PC-9 (cell line): ENCODE measurements at regions of chr11 and their contacts with region 1.

Region 1: DNA sequence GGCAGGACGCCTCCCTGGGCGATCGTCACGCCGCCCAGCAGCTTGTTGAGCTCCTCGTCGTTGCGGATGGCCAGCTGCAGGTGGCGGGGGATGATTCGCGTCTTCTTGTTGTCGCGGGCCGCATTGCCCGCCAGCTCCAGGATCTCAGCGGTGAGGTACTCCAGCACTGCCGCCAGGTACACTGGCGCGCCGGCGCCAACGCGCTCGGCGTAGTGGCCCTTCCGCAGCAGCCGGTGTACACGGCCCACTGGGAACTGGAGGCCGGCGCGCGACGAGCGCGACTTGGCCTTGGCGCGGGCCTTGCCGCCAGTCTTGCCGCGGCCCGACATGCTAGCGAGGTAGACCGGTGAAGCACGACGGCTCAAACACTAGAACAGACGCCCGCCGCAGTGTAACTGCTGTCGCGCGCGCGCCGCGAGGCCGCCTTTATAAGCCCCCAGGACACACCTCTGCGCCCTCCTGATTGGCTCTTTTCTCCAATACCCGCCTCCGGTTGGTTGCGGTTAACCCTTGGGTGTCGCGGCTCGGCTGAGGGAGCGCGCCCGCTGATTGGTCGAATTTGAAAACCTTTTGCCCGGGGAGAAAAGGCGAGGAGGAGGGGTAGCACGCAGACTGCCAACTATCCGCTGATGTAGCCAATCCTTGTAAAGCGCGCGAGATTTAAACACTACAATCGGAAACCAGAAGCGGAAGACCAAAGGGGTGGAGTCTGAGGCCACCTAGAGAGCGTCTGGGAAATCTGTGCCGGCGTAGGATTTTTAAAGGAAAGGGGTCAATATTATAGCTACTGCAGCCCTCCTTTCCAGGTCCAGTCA is 6.4 kb downstream of the DPAGT1 start:
- DNase-seq: peak; percentile 98 to 99
- H3K4me3 ChIP-seq: peak overlapping the region; percentile 91
- H3K27ac ChIP-seq: peak overlapping the region; percentile 48
- H3K4me1 ChIP-seq: peaks cover 29% of the 10 kb centered on the region
- H3K27me3 ChIP-seq: no peaks in the 10 kb centered on the region
- CTCF ChIP-seq: peak; percentile 27; the same call in 1 of the 2 replicates

Region 2: DNA sequence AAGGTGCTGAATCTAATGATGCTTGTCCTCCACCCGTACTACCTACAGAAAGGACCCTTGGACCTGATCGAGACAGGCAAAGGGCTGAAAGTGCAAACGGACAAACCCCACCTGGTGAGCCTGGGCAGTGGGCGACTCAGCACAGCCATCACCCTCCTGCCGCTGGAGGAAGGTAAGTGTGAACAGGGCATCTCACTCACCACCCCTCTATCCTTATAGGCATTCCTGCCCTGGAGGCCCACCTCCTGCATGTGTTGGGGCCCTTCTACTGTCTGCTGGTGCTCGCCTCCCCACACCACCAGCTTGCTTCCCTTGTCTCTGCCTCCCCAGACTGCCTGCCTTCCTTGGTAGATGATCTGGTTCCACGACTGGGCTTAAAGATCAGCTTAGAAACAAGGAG is 480.8 kb before region 1 on chr11:
- CTCF ChIA-PET with region 1: no interaction called
- POLR2A ChIA-PET with region 1: interaction called, 34 read pairs
- intact Hi-C with region 1: no loop called
- DNase-seq: no peak
- H3K4me3 ChIP-seq: no peak overlapping the region
- H3K27ac ChIP-seq: no peak overlapping the region
- H3K4me1 ChIP-seq: peaks cover 27% of the 10 kb centered on the region
- H3K27me3 ChIP-seq: no peaks in the 10 kb centered on the region
- CTCF ChIP-seq: no peak

Region 3: DNA sequence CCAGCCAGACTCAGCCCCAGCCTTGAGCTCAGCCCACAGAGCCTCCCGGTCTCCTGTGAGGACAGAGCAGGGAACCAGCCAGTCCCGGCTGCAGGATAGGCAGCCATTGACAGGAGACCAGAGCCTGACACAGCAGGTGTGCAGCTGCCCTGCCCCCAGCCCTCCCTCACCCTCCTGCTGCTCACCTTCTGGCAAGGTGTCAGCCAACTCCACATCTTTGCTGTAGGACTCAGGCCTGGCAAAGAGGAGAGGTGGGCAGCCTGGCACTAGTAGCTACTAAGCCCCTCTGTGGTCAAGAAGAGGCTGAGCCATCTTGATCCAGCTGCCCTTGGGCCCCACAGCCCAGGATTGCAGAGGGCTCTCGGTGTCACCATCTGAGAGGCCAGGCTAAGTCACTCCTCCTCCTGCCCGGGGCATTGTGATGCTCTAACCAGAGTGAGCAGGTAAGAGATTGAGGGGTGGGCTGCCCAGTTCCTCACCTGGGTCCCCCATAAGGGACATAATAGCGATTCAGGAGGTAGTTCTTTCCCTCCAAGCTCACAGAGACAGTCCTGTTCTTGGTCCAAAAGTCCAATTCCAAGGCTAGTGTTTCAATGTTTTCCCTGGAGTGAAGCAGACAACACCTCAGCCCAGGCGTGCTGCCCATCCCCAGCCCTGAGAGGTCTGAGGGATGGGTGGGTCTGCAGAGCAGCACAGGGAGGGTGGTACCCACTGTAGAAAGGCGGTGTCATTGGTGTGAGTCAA is 434.4 kb before region 1 on chr11:
- CTCF ChIA-PET with region 1: no interaction called
- POLR2A ChIA-PET with region 1: no interaction called
- intact Hi-C with region 1: no loop called
- DNase-seq: no peak
- H3K4me3 ChIP-seq: no peak overlapping the region
- H3K27ac ChIP-seq: no peak overlapping the region
- H3K4me1 ChIP-seq: peaks cover 11% of the 10 kb centered on the region
- H3K27me3 ChIP-seq: no peaks in the 10 kb centered on the region
- CTCF ChIP-seq: no peak

Region 4: DNA sequence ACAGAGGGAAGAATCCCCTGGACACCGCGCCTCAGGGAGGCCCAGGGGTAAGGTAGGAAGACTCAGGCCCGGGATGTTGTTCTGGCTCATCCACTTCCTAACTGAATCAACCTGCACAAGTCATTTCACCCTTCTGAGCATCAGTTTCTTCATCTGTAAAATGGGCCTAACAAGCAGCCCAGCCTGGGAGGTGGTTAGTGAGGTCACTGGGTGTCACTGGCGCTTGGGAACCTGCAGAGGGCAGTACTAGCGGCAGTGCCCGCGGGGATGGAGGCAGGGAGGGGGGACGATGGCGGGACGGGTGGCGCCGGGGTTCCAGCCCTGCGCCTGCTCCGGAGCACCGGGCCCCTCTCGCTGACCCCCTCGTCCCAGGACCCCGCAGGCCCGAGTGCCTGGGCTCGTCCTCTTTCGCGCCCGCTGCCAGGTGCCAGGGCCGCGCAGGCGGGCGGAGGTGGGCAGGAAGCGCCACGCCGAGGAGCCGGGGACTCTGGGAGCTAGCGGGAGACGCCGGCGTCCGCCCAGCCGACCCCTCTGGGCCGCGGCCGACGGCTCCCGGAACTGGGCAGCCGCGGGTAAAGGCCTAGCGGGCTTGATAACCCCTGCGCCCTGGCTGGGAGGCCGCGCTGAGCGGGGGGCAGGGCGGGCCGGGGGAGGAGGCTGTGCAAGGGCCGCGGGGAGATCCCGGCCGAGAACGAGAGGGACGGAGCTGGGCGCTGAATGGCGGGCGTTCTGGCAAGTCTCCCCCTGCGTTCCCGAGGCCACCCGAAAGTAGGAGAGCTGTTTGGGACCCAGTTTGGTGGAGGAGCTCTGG is 73.4 kb after region 1 on chr11 and contains the start of gene NLRX1:
- CTCF ChIA-PET with region 1: no interaction called
- POLR2A ChIA-PET with region 1: no interaction called
- intact Hi-C with region 1: loop called (anchors 2 kb)
- DNase-seq: peak; percentile 67 to 80
- H3K4me3 ChIP-seq: peak within 1 kb of the TSS; percentile 69
- H3K27ac ChIP-seq: peak within 1 kb of the TSS; percentile 81
- H3K4me1 ChIP-seq: peaks cover 33% of the 10 kb centered on the region
- H3K27me3 ChIP-seq: no peaks in the 10 kb centered on the region
- CTCF ChIP-seq: peak; percentile 92
- total RNA-seq, gene NLRX1: 18.4 and 22.5 TPM in 2 replicates

Region 5: DNA sequence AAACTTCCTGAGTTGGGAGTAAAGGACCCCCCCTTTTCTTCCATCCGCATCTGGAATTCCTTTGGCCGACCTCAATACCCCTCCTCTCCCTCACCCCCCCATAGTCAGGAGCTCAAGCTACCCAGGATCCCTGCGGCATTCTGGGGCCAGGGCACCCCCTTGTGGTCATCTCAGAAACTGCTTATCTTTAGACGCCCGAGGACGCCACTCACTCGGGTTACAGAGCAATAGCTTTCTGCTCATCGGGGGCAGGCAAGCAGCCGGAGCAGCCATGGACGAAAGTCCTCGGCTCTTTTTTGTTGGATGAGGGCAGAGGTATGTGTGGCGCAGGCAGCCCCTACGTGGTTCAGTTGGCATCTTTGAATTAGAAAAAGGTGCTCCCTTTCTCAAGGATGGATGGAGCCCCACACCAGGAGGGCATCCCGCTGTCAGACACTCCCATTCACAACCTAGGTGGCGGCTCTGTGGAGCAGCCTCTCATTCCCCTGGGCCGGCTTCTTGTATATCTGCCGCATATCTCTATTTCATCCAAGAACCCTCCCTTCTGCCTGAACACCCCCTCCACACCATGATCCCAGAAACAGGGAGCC is 243.1 kb after region 1 on chr11:
- CTCF ChIA-PET with region 1: interaction called, 10 read pairs
- POLR2A ChIA-PET with region 1: interaction called, 4 read pairs
- intact Hi-C with region 1: no loop called
- DNase-seq: peak; percentile 58 to 63
- H3K4me3 ChIP-seq: no peak overlapping the region
- H3K27ac ChIP-seq: no peak overlapping the region
- H3K4me1 ChIP-seq: peaks cover 16% of the 10 kb centered on the region
- H3K27me3 ChIP-seq: peaks cover 10% of the 10 kb centered on the region
- CTCF ChIP-seq: peak; percentile 94

Region 6: DNA sequence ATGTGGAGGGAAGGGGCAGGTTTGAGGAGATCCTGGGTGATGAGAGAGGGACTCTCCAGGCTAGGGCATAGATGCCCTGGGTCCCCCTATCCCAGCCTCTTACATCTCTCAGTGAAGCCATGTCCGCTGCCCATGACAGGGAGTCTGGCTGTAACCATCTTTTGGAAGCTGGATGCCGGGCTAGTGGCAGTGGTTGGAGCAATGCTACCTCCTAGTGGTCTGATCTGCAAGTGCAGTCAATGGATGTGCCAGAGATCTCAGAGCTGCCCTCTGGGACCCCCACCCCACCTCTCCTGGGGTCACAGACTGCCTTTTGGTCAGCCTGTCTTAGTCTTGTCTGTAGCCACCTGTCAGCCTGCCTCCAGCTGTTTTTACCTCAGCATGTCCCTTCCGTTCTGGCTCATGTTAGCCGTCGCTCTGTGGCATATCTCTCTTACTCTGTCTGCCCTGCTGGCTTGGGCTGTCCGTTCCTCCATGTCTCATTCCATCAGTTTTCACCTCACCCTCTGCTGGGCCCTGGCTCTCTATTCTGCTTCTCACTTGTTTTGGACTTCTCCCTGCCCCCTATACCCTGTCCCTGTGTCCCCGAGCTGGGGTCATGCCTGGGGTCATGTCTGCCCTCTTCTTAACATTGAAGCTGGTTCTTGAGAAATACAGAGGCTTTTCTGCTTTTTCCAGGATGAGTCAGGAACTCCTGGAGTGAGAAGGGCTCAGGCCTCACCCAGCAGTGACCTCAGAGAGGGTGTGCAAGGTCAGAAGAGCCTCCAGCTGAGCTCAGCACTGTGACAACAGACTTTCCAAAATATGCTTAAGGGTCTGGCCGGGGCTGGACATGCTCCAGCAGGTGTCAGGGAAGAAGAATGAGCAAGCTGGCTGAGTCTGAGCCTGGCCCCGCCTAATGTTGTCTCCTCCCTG is 379.7 kb after region 1 on chr11:
- CTCF ChIA-PET with region 1: no interaction called
- POLR2A ChIA-PET with region 1: no interaction called
- intact Hi-C with region 1: loop called (anchors 10 kb)
- DNase-seq: peak; percentile 64 to 75
- H3K4me3 ChIP-seq: no peak overlapping the region
- H3K27ac ChIP-seq: peak overlapping the region; percentile 34; the same call in 1 of the 2 replicates
- H3K4me1 ChIP-seq: peaks cover 19% of the 10 kb centered on the region
- H3K27me3 ChIP-seq: no peaks in the 10 kb centered on the region
- CTCF ChIP-seq: peak; percentile 98